KBM-7 (cell line): ENCODE measurements at regions of chr17 and their contacts with region 1.

Region 1: GRCh38 chr17:43360739-43361505 is 37.9 kb upstream of the ARL4D start:
- DNase-seq: peak; percentile 36

Region 2: GRCh38 chr17:42850954-42851353 is 510.0 kb before region 1 on chr17 and contains the start of gene AOC3:
- in situ Hi-C with region 1: loop called (anchors 25 kb)
- DNase-seq: no peak

Region 3: GRCh38 chr17:43006639-43007551 is 354.0 kb before region 1 on chr17 and contains the start of gene IFI35:
- in situ Hi-C with region 1: loop called (anchors 25 kb)
- DNase-seq: peak; percentile 85